CD4-positive, alpha-beta memory T cell (primary cell): ENCODE measurements at regions of chr7 and their contacts with region 1.

Region 1: DNA sequence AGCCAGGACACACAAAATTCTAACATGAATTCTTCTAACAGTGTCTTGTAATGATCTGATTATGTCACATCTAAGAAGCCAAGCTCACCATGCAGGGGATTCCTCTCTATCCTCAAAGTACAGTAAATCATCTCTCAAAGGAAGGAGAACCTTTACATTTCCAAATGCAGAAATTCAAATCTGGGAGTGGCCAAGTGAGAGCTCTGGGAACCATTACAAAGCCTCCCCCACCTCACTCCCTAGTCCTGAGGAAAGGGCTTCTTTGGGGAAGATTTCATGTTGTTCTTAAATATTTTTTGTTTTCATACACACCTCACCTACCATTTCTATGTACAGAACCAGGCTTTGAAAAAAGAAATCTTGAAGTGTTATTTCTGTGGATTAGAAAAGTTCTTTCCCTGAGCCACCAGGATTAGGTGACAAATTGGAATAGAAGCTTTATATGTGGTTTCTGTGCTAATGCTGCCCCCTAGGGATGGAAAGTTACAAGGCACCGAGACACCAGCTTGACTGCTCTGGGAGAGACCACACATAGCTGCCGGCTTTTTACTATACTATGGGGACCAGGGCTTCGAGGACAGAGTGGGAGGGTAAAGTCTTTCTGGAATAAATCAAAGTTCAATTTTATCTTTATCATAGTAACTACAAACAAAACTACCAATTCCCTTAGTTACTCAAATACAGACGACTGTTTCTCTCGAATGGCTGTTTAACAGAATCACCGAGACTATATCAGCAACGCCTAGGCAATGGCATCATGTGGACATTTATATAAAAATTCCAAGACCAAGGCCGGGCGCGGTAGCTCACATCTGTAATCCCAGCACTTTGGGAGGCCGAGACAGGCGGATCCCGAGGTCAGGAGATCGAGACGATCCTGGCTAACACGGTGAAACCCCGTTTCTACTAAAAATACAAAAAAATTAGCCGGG is 116.1 kb downstream of the RNF216 start:
- DNase-seq: peak; percentile 61 to 70 (median 65)
- H3K4me3 ChIP-seq: no peak overlapping the region
- H3K4me3 Mint-ChIP-seq: peak overlapping the region in 1 of 8 donors; percentile 36
- H3K27ac ChIP-seq: no peak overlapping the region
- H3K27ac Mint-ChIP-seq: peak overlapping the region in 5 of 7 donors; percentile 0 to 55 (median 2)
- H3K4me1 ChIP-seq: peaks cover 17% of the 10 kb centered on the region
- H3K4me1 Mint-ChIP-seq: peaks cover 16 to 30% (median 20%) of the 10 kb centered on the region in 4 donors
- H3K27me3 ChIP-seq: no peaks in the 10 kb centered on the region
- H3K27me3 Mint-ChIP-seq: no peaks in the 10 kb centered on the region

Region 2: DNA sequence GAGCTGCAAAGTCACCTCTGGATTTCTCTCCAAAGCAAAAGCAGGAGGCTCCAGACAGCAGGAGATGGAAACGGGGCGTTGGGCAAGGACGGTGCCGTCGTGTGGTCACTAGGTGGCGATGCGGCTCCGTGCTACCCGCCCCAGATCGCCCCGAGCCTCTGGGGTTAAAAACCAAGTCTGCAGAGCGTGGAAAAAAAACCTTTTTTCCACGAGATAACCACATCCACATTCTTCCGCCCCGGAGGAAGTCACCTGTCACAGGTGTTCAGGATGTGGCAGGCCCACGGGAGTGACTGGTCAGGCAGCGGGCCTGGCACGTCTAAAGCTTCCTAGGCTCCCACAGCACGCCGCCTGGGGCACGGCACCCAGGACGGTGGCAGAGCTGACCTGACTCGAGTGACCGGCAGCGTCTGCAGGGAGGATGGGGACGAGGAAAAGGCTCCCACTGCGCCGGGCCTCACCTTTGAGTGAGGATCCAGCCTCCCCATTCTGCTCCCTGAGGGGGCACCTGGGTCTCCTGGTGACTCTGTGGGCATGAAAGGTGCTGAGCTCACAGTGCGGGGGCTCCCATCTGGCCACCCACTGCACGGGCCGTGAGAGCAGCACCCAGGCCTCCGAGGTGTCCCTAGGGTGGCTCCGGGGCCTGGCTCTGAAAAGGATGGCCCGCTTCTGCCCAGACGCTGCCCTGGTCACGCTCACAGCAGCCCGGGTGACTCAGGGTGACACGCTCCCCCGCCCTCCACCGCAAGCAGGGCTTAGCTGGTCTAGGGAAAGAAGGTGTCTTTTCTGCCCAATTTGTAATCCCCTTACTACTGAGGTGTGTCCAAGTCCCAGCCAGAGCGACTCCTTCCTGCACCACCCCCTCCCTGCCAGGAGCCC is 170.4 kb before region 1 on chr7:
- CTCF ChIA-PET with region 1: interaction called, 92 read pairs
- POLR2A ChIA-PET with region 1: interaction called, 6 read pairs
- intact Hi-C with region 1: loop called (anchors 1 kb)
- DNase-seq: peak; percentile 80 to 82 (median 81)
- H3K4me3 ChIP-seq: peak overlapping the region in 1 of 2 donors; percentile 40
- H3K4me3 Mint-ChIP-seq: peak overlapping the region in 7 of 8 donors; percentile 46 to 73 (median 53)
- H3K27ac ChIP-seq: no peak overlapping the region
- H3K27ac Mint-ChIP-seq: peak overlapping the region in 5 of 7 donors; percentile 15 to 86 (median 63)
- H3K4me1 ChIP-seq: peaks cover 16% of the 10 kb centered on the region
- H3K4me1 Mint-ChIP-seq: peaks cover 5 to 27% (median 15%) of the 10 kb centered on the region in 4 donors
- H3K27me3 ChIP-seq: no peaks in the 10 kb centered on the region
- H3K27me3 Mint-ChIP-seq: no peaks in the 10 kb centered on the region

Region 3: DNA sequence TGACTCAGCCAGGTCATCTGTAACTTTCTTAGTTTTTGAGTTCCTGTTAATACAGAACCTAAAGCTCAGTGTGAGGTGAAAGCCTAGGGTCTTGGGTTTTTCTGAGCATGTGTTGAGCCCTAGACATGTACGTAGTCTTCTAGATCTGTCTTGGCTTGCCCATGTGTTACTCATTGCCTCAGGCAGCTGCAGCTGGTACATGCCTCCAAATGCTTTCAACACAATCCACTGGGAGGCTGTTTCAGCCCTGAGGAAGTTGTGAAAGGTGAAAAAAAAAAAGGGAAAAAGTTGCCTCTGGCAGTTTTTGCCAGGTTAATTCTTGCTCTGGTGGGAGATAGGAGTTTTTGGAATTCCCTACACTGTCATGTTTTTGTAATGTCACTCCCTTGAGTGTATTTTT is 18.5 kb before region 1 on chr7:
- CTCF ChIA-PET with region 1: interaction called, 12 read pairs
- POLR2A ChIA-PET with region 1: interaction called, 4 read pairs
- intact Hi-C with region 1: no loop called
- DNase-seq: no peak
- H3K4me3 ChIP-seq: no peak overlapping the region
- H3K4me3 Mint-ChIP-seq: no peak overlapping the region
- H3K27ac ChIP-seq: no peak overlapping the region
- H3K27ac Mint-ChIP-seq: peak overlapping the region in 2 of 7 donors; percentile 9 to 42
- H3K4me1 ChIP-seq: peaks cover 31% of the 10 kb centered on the region
- H3K4me1 Mint-ChIP-seq: peaks cover 25 to 36% (median 31%) of the 10 kb centered on the region in 4 donors
- H3K27me3 ChIP-seq: no peaks in the 10 kb centered on the region
- H3K27me3 Mint-ChIP-seq: no peaks in the 10 kb centered on the region

Region 4: DNA sequence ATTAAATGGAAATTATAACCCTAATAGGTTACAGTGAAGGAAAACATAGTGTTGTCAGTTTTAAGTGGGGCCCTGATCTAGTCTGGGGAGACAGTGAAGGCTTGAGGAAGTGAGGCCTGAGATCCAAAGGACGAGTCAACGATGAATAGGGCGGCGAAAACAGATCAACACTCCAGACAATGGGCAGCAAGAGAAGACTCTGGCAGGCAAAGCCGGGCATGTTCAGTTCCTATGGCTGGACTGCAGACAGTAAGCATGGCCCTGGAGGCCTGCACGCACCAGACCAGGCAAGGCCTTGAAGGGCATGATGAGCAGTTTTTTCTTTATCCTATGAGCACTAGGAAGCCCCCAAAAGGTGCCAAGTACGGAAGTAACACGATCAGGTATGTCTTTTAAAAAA is 11.7 kb before region 1 on chr7:
- CTCF ChIA-PET with region 1: interaction called, 16 read pairs
- POLR2A ChIA-PET with region 1: interaction called, 3 read pairs
- intact Hi-C with region 1: no loop called
- DNase-seq: no peak
- H3K4me3 ChIP-seq: no peak overlapping the region
- H3K4me3 Mint-ChIP-seq: no peak overlapping the region
- H3K27ac ChIP-seq: no peak overlapping the region
- H3K27ac Mint-ChIP-seq: peak overlapping the region in 2 of 7 donors; percentile 18 to 36
- H3K4me1 ChIP-seq: no peaks in the 10 kb centered on the region
- H3K4me1 Mint-ChIP-seq: peaks cover under 1 to 7% (median 4%) of the 10 kb centered on the region in 4 donors
- H3K27me3 ChIP-seq: no peaks in the 10 kb centered on the region
- H3K27me3 Mint-ChIP-seq: no peaks in the 10 kb centered on the region

Region 5: DNA sequence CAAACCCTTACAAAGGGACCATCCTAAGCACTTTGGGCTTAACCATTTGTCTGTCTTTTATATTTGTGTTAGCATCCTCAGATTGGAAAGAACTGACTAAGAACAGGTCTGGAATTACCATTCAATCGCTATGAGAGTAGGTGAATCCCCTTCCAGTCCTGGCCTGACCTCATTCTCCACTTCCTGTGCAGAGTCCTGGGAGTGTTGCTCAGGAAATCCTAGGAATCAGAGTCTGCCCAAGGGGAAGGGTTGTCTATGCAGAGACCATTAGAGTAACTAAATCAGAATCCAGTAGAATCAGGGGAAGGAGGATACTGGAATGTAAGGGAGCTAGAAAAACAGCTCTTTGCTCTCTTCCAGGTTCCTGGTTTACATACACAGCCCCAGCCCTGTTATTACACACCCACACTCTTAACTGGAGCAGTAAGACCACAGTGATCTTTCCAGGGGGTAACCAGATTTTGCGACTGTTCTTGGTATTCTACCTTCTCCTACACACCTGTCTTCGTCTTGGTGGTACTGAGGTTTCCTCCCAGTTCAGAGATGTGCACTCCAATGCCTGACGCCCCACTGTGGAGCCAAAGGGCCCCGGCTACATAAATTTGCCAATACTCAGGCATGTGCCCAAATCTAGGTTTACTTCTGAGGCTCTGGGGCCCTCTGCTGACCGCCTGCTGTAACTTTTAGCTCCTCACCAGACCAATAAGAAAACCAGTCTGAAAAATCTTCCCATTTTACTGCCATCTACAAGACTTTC is 12.4 kb after region 1 on chr7:
- CTCF ChIA-PET with region 1: interaction called, 57 read pairs
- POLR2A ChIA-PET with region 1: no interaction called
- intact Hi-C with region 1: no loop called
- DNase-seq: peak in 1 of 5 donors; percentile 43
- H3K4me3 ChIP-seq: no peak overlapping the region
- H3K4me3 Mint-ChIP-seq: peak overlapping the region in 1 of 8 donors; percentile 15
- H3K27ac ChIP-seq: no peak overlapping the region
- H3K27ac Mint-ChIP-seq: peak overlapping the region in 6 of 7 donors; percentile 25 to 77 (median 58)
- H3K4me1 ChIP-seq: peaks cover 42% of the 10 kb centered on the region
- H3K4me1 Mint-ChIP-seq: peaks cover 19 to 65% (median 45%) of the 10 kb centered on the region in 4 donors
- H3K27me3 ChIP-seq: no peaks in the 10 kb centered on the region
- H3K27me3 Mint-ChIP-seq: no peaks in the 10 kb centered on the region

Region 6: GRCh38 chr7:5689118-5689517 is 23.8 kb after region 1 on chr7:
- CTCF ChIA-PET with region 1: interaction called, 25 read pairs
- POLR2A ChIA-PET with region 1: interaction called, 9 read pairs
- intact Hi-C with region 1: no loop called
- DNase-seq: peak; percentile 60 to 82 (median 76)
- H3K4me3 ChIP-seq: peak overlapping the region in 1 of 2 donors; percentile 34
- H3K4me3 Mint-ChIP-seq: peak overlapping the region; percentile 52 to 85 (median 72)
- H3K27ac ChIP-seq: peak overlapping the region; percentile 51
- H3K27ac Mint-ChIP-seq: peak overlapping the region; percentile 88 to 97 (median 94)
- H3K4me1 ChIP-seq: peaks cover 99% of the 10 kb centered on the region
- H3K4me1 Mint-ChIP-seq: peaks cover 56 to 91% (median 75%) of the 10 kb centered on the region in 4 donors
- H3K27me3 ChIP-seq: no peaks in the 10 kb centered on the region
- H3K27me3 Mint-ChIP-seq: no peaks in the 10 kb centered on the region

Region 7: DNA sequence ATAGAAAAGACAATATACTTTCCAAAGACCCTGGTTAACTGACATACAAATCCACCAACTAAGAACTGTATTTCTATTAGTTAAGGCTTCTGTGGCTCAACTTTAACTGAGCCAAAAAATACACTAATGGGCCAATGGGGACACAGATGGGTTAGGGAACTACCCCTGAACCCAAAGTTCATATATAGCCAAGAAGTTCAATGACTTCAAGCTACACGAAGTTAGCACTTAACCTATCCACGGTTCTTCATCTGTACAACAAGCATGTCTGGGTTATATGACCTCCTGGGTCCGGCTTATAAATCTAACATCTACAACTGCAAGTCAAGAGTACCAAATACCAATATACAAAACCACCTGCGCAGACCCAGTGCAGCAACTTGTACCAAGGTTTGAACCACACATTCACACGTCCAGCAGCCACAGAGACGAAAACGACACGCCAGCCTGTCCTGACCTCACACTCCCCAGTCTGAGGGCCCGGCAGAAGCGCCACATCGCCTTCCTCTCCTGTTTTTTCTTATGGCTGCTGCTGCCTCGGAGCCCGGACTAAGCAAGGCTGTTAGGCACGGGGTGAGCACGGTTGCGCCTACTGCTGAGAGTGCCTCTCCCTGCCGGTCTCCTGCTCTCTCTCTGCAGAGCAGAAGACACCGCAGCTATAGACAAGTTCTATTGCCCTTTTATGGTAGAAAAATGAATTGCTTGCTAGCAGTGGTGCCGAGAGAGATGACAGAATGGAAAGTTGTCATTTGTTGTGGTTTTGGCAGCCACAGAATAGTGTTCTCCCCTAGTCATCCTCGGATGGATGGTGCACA is 29.8 kb after region 1 on chr7:
- CTCF ChIA-PET with region 1: interaction called, 100 read pairs
- POLR2A ChIA-PET with region 1: interaction called, 9 read pairs
- intact Hi-C with region 1: no loop called
- DNase-seq: peak; percentile 76 to 89 (median 80)
- H3K4me3 ChIP-seq: peak overlapping the region; percentile 44 to 51
- H3K4me3 Mint-ChIP-seq: peak overlapping the region; percentile 90 to 98 (median 95)
- H3K27ac ChIP-seq: peak overlapping the region; percentile 64
- H3K27ac Mint-ChIP-seq: peak overlapping the region; percentile 88 to 98 (median 94)
- H3K4me1 ChIP-seq: peaks cover 100% of the 10 kb centered on the region
- H3K4me1 Mint-ChIP-seq: peaks cover 79 to 99% (median 90%) of the 10 kb centered on the region in 4 donors
- H3K27me3 ChIP-seq: no peaks in the 10 kb centered on the region
- H3K27me3 Mint-ChIP-seq: no peaks in the 10 kb centered on the region